Thyroid gland (tissue), 4 donors: ENCODE measurements at regions of chr4 and their contacts with region 1.

Region 1: DNA sequence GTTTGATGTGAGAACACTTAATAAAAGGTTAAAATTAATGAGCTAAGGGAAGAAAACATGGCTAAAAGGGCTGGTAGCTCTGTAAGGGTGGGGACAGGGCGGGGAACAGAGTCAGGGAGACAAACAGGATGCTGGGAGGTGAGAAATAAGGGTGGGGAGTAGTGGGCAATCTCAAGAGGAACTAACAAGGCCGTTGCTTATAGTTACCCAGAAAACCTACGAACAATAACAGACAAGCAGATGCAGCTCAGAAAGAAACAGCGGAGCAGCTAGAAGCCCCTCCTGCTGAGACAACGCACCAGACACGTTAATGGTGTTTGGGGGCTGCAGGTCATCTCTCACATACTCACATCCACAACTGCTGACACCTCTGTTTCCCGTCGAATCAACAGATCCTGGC is 9.7 kb upstream of the KLF3 start:
- DNase-seq: no peak
- H3K4me3 ChIP-seq: no peak overlapping the region
- H3K27ac ChIP-seq: no peak overlapping the region
- H3K4me1 ChIP-seq: no peaks in the 10 kb centered on the region
- H3K27me3 ChIP-seq: no peaks in the 10 kb centered on the region
- CTCF ChIP-seq: no peak
- POLR2A ChIP-seq: no peak

Region 2: DNA sequence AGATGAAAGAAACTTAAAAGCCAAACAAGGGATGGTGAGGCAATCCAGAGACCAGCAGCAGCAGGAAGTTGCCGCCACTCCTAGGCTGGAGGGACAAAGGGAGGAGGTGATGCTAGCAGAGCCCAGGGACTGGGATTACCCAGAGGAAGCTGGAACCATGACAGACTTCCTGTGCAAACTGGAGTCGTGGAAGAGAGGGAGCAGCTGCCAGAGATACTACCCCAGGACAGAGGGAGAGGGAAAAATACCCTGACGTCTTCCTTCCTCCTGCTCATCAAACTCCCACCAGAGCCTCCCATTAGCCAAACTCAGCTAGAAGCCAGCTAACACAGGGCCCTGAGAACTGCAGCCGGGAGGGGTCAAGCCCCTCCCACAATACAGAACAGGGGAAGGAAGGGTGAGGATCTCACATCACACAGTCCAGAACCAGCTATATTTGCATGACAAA is 91.5 kb before region 1 on chr4:
- intact Hi-C with region 1: loop called (anchors 10 kb)
- DNase-seq: peak; percentile 19 to 26
- H3K4me3 ChIP-seq: no peak overlapping the region
- H3K27ac ChIP-seq: no peak overlapping the region
- H3K4me1 ChIP-seq: peaks cover 12 to 30% of the 10 kb centered on the region in 2 donors
- H3K27me3 ChIP-seq: no peaks in the 10 kb centered on the region
- CTCF ChIP-seq: no peak
- POLR2A ChIP-seq: no peak

Region 3: DNA sequence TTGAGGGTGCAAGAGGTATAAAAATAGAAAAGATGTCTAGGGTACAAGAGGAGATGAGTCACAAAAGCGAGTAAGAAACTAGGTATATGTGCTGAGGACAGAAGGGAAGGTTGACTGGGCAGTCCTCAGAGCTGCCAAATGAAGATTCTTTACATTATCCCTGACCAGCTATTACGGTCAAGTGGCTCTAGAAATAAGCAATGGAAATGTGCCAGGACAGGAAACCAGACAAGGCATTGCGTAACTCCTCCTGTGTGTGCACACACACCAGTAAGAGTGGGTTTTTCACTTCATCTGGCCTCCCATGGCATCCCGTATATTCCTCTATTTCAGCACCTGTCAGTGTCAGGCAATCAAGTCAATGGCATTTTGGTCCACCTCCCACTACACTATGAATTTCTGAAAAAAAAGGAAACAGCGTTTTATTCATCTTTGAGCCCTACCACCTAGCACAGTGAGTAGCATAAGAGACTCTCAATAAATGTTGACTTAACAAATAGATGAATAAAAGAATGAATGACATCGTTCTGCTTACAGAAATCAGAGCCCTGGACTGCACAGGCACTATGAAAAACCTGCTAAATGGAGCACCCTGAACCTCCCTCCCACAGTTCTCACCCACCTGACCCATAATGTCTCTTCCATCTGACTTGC is 52.9 kb before region 1 on chr4:
- intact Hi-C with region 1: loop called (anchors 10 kb)
- DNase-seq: peak; percentile 32 to 34
- H3K4me3 ChIP-seq: no peak overlapping the region
- H3K27ac ChIP-seq: peak overlapping the region in 1 of 3 donors; percentile 18
- H3K4me1 ChIP-seq: peaks cover 22 to 36% of the 10 kb centered on the region in 2 donors
- H3K27me3 ChIP-seq: no peaks in the 10 kb centered on the region
- CTCF ChIP-seq: no peak
- POLR2A ChIP-seq: no peak